ENCODE measurements at regions of chr9 and their contacts with region 1.

Region 1: GRCh38 chr9:36407122-36407723 is 7.2 kb upstream of the RNF38 start:
- DNase-seq: peak; percentile 64
- H3K4me3 ChIP-seq: peak overlapping the region in 1 of 2 experiments; percentile 20; a peak in 1 of 4 replicates
- H3K27ac ChIP-seq: peak overlapping the region in 1 of 2 experiments; percentile 55; a peak in 2 of 4 replicates
- H3K4me1 ChIP-seq: peaks cover 0 to 5% of the 10 kb centered on the region in 2 experiments; a peak in 1 of 4 replicates
- H3K27me3 ChIP-seq: no peaks in the 10 kb centered on the region
- CTCF ChIP-seq: peak; percentile 93
- EP300 ChIP-seq: no peak
- RAD21 ChIP-seq: peak; percentile 93

Region 2: DNA sequence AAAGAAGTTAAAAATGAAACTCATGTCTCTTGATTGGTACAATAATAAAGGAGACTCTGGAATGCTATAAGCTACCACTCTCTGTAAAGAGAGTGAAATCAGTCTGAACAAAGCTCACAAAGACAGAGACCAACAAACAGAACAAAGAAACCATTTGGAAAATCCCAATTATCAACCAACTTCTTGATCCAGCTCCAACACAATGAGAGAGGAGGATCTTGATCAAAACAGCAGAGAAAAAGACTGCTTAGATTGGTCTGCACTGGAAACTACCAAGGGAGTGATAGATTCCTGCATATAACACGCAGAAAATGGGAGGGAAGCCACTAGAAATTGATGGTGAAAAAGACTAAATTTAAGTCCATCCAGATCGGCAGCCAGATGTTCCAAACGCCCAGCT is 16.0 kb after region 1 on chr9:
- CTCF ChIA-PET with region 1: interaction called, 56 read pairs
- POLR2A ChIA-PET with region 1: interaction called, 3 read pairs
- DNase-seq: no peak
- H3K4me3 ChIP-seq: no peak overlapping the region
- H3K27ac ChIP-seq: no peak overlapping the region
- H3K4me1 ChIP-seq: peaks cover 7% of the 10 kb centered on the region in 2 experiments; a peak in 3 of 4 replicates
- H3K27me3 ChIP-seq: no peaks in the 10 kb centered on the region
- CTCF ChIP-seq: no peak
- EP300 ChIP-seq: no peak
- RAD21 ChIP-seq: no peak

Region 3: GRCh38 chr9:36441966-36442365 is 34.7 kb after region 1 on chr9:
- CTCF ChIA-PET with region 1: interaction called, 55 read pairs
- POLR2A ChIA-PET with region 1: no interaction called
- DNase-seq: no peak
- H3K4me3 ChIP-seq: no peak overlapping the region
- H3K27ac ChIP-seq: no peak overlapping the region
- H3K4me1 ChIP-seq: peaks cover under 1 to 6% of the 10 kb centered on the region in 2 experiments; a peak in 2 of 4 replicates
- H3K27me3 ChIP-seq: no peaks in the 10 kb centered on the region
- CTCF ChIP-seq: no peak
- EP300 ChIP-seq: no peak
- RAD21 ChIP-seq: no peak

Region 4: GRCh38 chr9:36457836-36458429 is 50.7 kb after region 1 on chr9:
- CTCF ChIA-PET with region 1: interaction called, 135 read pairs
- POLR2A ChIA-PET with region 1: no interaction called
- DNase-seq: no peak
- H3K4me3 ChIP-seq: no peak overlapping the region
- H3K27ac ChIP-seq: no peak overlapping the region
- H3K4me1 ChIP-seq: no peaks in the 10 kb centered on the region
- H3K27me3 ChIP-seq: no peaks in the 10 kb centered on the region
- CTCF ChIP-seq: no peak
- EP300 ChIP-seq: no peak
- RAD21 ChIP-seq: no peak

Region 5: GRCh38 chr9:36551129-36551528 is 143.9 kb after region 1 on chr9:
- CTCF ChIA-PET with region 1: interaction called, 181 read pairs
- POLR2A ChIA-PET with region 1: no interaction called
- DNase-seq: no peak
- H3K4me3 ChIP-seq: no peak overlapping the region
- H3K27ac ChIP-seq: peak overlapping the region in 1 of 2 experiments; percentile 37; a peak in 2 of 4 replicates
- H3K4me1 ChIP-seq: no peaks in the 10 kb centered on the region
- H3K27me3 ChIP-seq: 0 out of 2 replicates have a peak, but pooled peaks cover 8% of the 10 kb centered on the region
- CTCF ChIP-seq: no peak
- EP300 ChIP-seq: no peak
- RAD21 ChIP-seq: no peak

Region 6: GRCh38 chr9:36572515-36573418 is 165.5 kb after region 1 on chr9 and contains the start of gene MELK:
- CTCF ChIA-PET with region 1: interaction called, 16 read pairs
- POLR2A ChIA-PET with region 1: no interaction called
- DNase-seq: peak; percentile 99
- H3K4me3 ChIP-seq: peak within 1 kb of the TSS; percentile 81 to 87
- H3K27ac ChIP-seq: peak within 1 kb of the TSS; percentile 75 to 82
- H3K4me1 ChIP-seq: peaks cover 3 to 7% of the 10 kb centered on the region in 2 experiments; a peak in 3 of 4 replicates
- H3K27me3 ChIP-seq: no peaks in the 10 kb centered on the region
- CTCF ChIP-seq: no peak
- EP300 ChIP-seq: no peak
- RAD21 ChIP-seq: no peak
- polyA plus RNA-seq, gene MELK: 16.5 and 18.0 TPM in 2 replicates

Region 7: GRCh38 chr9:36913393-36914211 is 506.4 kb after region 1 on chr9:
- CTCF ChIA-PET with region 1: no interaction called
- POLR2A ChIA-PET with region 1: no interaction called
- DNase-seq: no peak
- H3K4me3 ChIP-seq: no peak overlapping the region
- H3K27ac ChIP-seq: no peak overlapping the region
- H3K4me1 ChIP-seq: no peaks in the 10 kb centered on the region; a peak in 1 of 4 replicates
- H3K27me3 ChIP-seq: peaks cover 22% of the 10 kb centered on the region; the same call in 1 of the 2 replicates
- CTCF ChIP-seq: peak; percentile 18; the same call in 1 of the 2 replicates
- EP300 ChIP-seq: no peak
- RAD21 ChIP-seq: no peak